Heart left ventricle (tissue), 16 donors: ENCODE measurements at regions of chr5 and their contacts with region 1.

Region 1: DNA sequence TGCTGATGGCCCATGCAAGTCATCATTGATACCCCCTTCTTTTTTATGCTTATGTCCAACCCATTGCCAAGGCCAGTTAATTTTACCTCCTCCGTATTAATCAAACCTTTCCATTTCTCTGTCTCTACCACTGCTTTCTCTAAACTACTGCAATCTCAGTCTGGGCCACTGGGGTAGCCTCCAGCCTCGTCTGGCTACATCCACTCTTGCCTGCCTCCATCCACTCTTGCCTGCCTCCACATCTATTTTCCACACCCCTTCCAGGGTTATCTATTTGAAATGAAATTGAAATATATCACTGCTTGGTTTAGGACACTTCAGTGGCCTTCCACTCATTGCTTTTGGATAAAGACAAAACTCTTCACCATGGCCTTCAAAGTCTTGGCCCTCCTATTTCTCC is 425.3 kb upstream of the CLINT1 start:
- DNase-seq: no peak
- ATAC-seq: no peak
- H3K4me3 ChIP-seq: no peak overlapping the region
- H3K27ac ChIP-seq: no peak overlapping the region
- H3K4me1 ChIP-seq: peaks cover 0 to 5% (median 0%) of the 10 kb centered on the region in 12 donors
- H3K27me3 ChIP-seq: no peaks in the 10 kb centered on the region
- CTCF ChIP-seq: no peak
- POLR2A ChIP-seq: no peak

Region 2: DNA sequence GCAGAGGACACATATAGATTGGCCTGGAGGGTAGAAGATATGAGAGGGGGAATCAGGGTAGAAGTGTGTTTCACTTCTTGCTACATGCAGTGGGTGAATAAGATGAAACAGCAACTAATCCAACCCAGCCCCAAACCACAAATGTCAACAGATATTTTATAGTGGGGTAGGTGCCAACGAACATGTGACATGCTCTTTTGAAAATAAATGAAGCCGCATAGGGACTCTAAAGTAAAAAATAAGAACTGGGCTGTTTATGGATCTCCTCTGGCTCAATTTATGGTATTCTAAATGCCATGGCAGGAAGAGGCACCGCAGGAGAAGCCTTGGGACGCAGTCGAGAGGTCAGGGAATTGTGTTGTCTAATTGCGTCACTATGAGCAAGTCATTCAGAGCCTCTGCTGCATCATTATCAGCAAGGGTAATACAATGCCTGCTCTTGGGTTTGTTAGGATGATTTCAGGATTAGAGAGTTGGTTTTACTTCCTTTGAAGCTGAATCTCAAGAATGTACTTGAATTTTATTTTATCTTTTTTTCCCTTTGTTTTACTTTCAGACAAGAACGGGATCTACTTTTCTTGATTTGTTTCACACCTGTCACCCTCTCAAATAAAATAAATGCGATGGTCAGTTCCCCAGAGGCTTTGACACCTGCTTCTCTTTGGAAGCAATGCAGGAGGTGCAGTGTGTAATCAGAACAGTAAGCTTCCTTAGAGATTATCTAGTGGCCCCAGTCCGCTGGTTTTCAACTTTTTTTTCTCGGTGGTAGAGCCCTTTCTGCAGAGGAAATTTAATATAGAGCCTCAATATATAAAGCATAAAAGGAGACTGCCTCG is 49.7 kb before region 1 on chr5:
- intact Hi-C with region 1: no loop called
- DNase-seq: no peak
- ATAC-seq: no peak
- H3K4me3 ChIP-seq: no peak overlapping the region
- H3K27ac ChIP-seq: no peak overlapping the region
- H3K4me1 ChIP-seq: peaks cover 0 to 15% (median 0%) of the 10 kb centered on the region in 12 donors
- H3K27me3 ChIP-seq: no peaks in the 10 kb centered on the region
- CTCF ChIP-seq: no peak
- POLR2A ChIP-seq: no peak

Region 3: GRCh38 chr5:158538506-158539074 is 254.3 kb after region 1 on chr5:
- intact Hi-C with region 1: no loop called
- DNase-seq: peak in 2 of 5 donors; percentile 34 to 37
- ATAC-seq: peak; percentile 17 to 74 (median 61)
- H3K4me3 ChIP-seq: no peak overlapping the region
- H3K27ac ChIP-seq: peak overlapping the region in 5 of 12 donors; percentile 3 to 43 (median 22)
- H3K4me1 ChIP-seq: peaks cover 0 to 10% (median 3%) of the 10 kb centered on the region in 12 donors
- H3K27me3 ChIP-seq: no peaks in the 10 kb centered on the region
- CTCF ChIP-seq: no peak
- POLR2A ChIP-seq: no peak

Region 4: DNA sequence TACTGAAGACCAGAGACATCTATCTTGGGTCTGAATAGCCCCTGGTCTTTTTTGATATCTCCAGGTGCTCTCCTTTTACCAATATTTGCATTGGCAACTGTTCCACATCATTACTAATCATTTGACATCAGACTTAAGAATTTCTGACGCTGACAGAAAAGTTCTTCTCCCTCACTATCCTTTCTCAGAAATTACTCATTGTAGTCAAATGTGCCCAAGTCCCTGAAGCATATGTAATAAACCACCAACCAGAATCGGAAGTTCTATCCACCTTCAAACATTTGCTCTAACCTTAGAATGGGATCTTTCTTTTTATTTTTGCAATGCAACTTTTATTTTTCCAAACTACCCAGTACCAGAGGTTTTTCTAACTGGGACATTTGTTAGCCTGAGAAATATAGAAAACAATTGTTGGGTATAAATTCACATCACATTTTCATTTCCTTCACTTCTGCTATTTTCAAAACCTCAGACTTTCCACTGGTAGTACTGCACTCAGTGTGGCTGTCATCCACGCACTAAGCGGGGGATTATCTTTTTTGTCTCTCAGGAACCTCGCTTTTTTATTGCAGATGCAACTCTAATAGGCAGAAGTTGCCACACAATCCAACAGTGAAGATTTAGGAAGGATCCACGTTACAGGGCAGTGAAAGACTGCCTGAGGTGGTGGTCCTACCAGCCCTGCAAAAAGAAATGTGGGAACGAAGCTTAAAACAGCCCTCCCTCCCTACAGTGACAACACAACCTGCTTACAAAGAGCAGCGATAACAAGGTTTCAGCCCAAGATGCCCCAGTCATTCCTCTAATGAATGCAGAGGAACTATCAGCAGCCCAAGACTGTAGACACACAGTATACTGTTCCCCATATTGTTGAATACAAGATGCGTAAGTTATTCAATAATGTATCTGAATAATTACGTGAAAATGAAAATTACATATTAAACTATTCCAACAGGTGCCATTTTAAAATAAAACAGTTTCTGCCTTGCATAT is 614.2 kb after region 1 on chr5:
- intact Hi-C with region 1: loop called in 1 of 10 experiments (anchors 5 kb)
- DNase-seq: no peak
- ATAC-seq: no peak
- H3K4me3 ChIP-seq: no peak overlapping the region
- H3K27ac ChIP-seq: no peak overlapping the region
- H3K4me1 ChIP-seq: peaks cover 0 to 48% (median 15%) of the 10 kb centered on the region in 12 donors
- H3K27me3 ChIP-seq: no peaks in the 10 kb centered on the region
- CTCF ChIP-seq: no peak
- POLR2A ChIP-seq: no peak